Vagina (tissue), 2 donors: ENCODE measurements at regions of chr22 and their contacts with region 1.

Region 1: GRCh38 chr22:27107824-27108223 is 450.4 kb downstream of the MIAT start:
- DNase-seq: no peak
- H3K4me3 ChIP-seq: no peak overlapping the region
- H3K27ac ChIP-seq: peak overlapping the region; percentile 71
- H3K4me1 ChIP-seq: peaks cover 34% of the 10 kb centered on the region
- H3K27me3 ChIP-seq: no peaks in the 10 kb centered on the region
- CTCF ChIP-seq: no peak
- POLR2A ChIP-seq: no peak

Region 2: GRCh38 chr22:27212617-27213177 is 104.9 kb after region 1 on chr22:
- intact Hi-C with region 1: loop called (anchors 2 kb)
- DNase-seq: peak in 1 of 2 donors; percentile 99
- H3K4me3 ChIP-seq: no peak overlapping the region
- H3K27ac ChIP-seq: peak overlapping the region; percentile 72
- H3K4me1 ChIP-seq: peaks cover 21% of the 10 kb centered on the region
- H3K27me3 ChIP-seq: no peaks in the 10 kb centered on the region
- CTCF ChIP-seq: no peak
- POLR2A ChIP-seq: no peak